ENCODE measurements at regions of chr5 and their contacts with region 1.

Region 1: DNA sequence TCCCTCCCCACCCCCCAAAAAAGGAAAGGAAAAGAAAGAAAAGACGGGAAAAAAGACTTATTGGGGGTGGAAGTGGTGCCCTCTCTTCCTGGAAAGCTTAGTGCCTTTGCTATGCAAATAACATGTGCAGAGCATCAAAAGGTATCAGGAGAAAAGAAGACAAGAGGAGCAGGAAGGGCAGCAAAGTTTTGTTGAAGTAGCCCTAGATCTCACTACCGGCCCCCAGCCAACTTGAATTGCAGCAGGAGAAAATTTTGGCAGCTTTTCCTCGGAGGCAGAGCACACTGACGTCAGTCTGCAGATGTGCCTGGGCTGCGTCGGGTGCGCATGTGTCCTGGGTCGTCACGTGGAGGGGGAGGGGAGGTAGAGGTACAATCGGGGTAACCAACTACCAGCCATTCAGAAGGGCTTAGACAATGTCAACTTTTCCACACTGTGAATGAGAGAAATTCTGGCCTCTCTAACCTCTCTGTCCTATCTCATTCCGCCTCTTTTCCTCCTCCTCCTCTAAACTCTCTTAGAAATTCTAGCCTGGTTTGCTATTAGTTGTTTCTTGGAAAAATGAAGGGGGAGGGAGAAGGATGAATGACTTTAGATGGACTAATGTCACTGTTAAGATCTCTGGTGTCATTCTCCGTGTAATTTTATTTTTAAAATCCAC is at the start of gene ADAMTS6:
- DNase-seq: peak; percentile 89

Region 2: DNA sequence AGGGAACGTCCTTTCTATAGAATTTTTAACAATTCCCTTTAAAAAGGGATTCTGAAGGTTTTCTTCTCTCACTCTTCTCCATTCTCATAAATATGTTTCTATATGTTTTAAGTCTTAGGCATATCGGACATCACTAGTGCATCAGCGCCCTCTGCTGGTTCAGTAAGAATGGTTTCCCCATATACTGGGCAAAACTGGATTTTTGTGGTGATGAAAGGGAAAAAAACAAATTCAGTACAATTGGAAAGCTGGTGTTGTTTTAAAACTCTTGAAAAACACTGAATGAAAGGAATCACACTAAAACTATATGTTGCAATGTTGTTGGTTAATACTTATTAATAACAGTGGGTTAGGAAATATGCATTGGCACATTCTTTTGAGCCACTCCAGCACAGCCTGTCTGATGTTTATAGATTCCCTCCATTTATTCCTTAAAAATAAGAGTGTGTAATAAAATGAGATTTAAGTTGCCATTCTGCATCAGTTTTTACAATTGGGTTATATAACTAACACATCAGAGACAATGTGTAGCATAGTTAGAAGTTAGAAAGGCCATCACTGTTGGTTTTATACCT is 697.2 kb before region 1 on chr5:
- in situ Hi-C with region 1: no loop called
- DNase-seq: peak; percentile 68

Region 3: GRCh38 chr5:64811050-64811640 is 670.6 kb before region 1 on chr5:
- in situ Hi-C with region 1: loop called (anchors 25 kb)
- DNase-seq: peak; percentile 57

Region 4: DNA sequence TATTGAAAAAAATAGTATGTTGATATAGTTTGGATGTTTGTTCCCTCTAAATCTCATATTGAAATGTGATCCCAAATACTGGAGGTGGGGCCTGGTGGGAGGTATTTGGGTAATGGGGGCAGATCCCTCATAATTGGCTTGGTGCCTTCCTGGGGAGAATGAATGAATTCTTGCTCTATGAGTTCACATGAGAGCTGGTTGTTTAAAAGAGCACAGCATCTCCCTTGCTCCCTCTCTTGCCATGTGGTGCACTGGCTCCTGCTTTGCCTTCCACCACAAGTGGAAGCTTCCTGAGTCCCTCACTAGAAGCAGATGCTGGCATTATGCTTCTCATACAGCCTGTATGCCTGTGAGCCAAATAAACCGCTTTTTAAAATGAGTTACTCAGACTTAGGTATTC is 154.8 kb before region 1 on chr5:
- in situ Hi-C with region 1: no loop called
- DNase-seq: no peak

Region 5: GRCh38 chr5:65364907-65365306 is 116.9 kb before region 1 on chr5:
- in situ Hi-C with region 1: no loop called
- DNase-seq: no peak

Region 6: DNA sequence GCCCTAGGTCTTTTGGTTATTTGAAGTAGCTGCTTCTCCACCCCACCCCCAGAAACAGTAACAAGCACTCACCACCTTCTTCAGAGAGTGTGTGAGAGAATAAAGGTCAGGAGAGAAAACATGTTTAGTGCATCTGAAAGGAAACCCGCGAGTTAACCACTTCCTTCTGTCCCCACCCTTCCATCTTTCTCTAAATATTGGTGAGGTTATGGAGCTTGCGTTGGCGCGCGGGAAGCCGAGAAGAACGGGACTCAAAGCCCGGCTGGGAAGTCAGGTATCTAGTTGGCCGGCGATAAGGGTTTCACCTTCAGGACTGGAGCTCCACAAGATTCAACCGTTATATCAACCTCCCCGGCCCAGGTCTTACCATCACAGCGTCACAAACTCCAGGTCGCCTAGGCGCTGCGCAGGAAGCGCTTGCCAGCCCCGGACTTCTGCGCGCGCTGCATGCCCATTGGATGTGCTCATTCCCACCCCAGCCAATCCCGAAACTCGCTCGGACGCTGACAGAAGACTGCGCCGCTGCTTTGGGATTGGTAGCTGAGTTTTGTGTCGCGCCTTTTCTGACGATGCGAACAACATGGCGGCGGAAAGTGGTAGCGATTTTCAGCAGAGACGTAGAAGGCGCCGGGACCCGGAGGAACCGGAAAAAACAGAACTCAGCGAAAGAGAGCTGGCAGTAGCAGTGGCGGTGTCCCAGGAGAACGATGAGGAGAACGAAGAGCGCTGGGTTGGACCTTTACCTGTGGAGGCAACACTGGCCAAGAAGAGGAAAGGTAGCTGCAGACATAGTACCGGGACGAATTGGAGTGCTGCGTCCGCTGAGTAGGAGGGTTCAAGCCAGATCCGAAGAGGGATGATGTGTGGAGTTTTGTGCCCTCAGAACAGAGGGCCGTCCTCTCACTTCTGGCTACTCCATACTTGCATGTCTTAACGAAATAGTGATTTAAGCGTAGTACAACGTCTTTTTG is 81.3 kb after region 1 on chr5 and contains the starts of genes CENPK and PPWD1:
- in situ Hi-C with region 1: no loop called
- DNase-seq: peak; percentile 94

Measured in ACHN (cell line).